HAP-1 (cell line): ENCODE measurements at regions of chr1 and their contacts with region 1.

Region 1: GRCh38 chr1:22922640-22923039 is 50.0 kb downstream of the LACTBL1 start:
- DNase-seq: no peak
- H3K4me3 ChIP-seq: no peak overlapping the region
- H3K4me1 ChIP-seq: no peaks in the 10 kb centered on the region
- H3K27me3 ChIP-seq: 0 out of 2 replicates have a peak, but pooled peaks cover 8% of the 10 kb centered on the region

Region 2: GRCh38 chr1:22665752-22666151 is 256.9 kb before region 1 on chr1:
- in situ Hi-C with region 1: loop called (anchors 10 kb)
- DNase-seq: peak in 1 of 2 experiments; percentile 55
- H3K4me3 ChIP-seq: no peak overlapping the region
- H3K4me1 ChIP-seq: no peaks in the 10 kb centered on the region
- H3K27me3 ChIP-seq: peaks cover 20% of the 10 kb centered on the region; the same call in 1 of the 2 replicates

Region 3: DNA sequence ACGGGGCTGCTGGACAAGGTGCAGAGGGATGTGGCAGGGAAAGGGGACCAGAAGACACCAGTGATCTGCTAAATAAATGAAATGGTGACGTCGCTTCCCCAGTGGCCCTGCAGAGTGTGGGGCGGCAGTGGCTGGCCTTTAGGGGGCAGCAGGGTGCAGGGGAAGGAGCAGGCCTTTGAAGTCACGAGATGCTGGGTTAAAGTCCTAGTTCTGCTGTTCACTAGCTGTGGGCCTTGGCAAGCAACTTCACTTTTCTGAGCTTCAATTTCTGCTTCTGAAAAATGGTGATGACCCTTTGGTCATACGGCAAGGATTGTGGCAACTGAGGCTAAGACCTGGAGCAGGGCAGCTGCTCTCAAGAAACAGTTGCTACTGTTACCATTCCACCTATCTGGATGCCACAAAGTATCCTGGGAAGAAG is 887.1 kb after region 1 on chr1:
- in situ Hi-C with region 1: no loop called
- DNase-seq: peak; percentile 69 to 88
- H3K4me3 ChIP-seq: no peak overlapping the region
- H3K4me1 ChIP-seq: no peaks in the 10 kb centered on the region
- H3K27me3 ChIP-seq: no peaks in the 10 kb centered on the region